Ascending aorta (tissue), 2 donors: ENCODE measurements at regions of chr9 and their contacts with region 1.

Region 1: GRCh38 chr9:112333639-112334431 is 416 bp upstream of the PTBP3 start:
- DNase-seq: peak; percentile 65 to 97
- H3K4me3 ChIP-seq: peak overlapping the region; percentile 83 to 95
- H3K27ac ChIP-seq: peak overlapping the region; percentile 98 to 100
- H3K4me1 ChIP-seq: peaks cover 0 to 7% of the 10 kb centered on the region in 2 donors
- H3K27me3 ChIP-seq: no peaks in the 10 kb centered on the region
- CTCF ChIP-seq: peak; percentile 31 to 77 (median 63)

Region 2: DNA sequence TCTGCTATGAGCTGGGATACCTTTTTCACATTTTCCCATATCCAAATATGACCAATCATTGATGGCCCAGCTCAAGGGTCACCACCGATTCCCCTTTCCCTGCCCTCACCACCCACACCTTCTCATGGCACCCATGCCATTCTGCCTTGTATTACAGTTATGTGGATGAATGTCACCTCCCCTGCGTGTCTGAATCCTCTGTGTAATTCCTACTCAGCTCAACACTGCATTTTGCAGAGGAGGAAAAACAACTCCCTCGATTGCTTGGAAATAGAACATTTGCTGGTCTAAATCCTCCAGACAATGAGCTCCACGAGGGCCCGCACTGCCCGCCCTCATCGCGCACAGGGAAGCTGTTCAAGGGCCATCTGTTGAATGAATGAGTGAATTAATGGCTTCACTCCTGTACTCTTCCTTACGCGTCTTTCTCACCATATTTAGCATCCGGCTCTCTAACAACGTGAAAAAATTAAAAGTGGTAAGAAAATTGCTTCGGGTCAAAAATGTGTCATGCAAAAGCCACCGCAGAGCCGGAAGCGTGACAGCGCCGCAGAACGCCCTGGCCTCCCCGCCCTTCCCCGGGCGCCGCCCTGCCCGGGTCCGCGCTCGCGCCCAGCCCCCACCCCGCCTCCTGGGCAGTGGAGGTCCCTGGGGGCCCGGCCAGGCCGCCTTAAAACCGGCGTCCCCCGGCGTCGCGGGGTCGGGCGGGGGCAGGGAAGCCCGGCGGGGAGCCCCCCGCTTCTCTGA is 159.4 kb before region 1 on chr9:
- intact Hi-C with region 1: loop called (anchors 1 kb)
- DNase-seq: peak in 1 of 2 donors; percentile 83
- H3K4me3 ChIP-seq: peak overlapping the region; percentile 76 to 78
- H3K27ac ChIP-seq: peak overlapping the region; percentile 12 to 43
- H3K4me1 ChIP-seq: peaks cover 0 to 6% of the 10 kb centered on the region in 2 donors
- H3K27me3 ChIP-seq: no peaks in the 10 kb centered on the region
- CTCF ChIP-seq: no peak

Region 3: DNA sequence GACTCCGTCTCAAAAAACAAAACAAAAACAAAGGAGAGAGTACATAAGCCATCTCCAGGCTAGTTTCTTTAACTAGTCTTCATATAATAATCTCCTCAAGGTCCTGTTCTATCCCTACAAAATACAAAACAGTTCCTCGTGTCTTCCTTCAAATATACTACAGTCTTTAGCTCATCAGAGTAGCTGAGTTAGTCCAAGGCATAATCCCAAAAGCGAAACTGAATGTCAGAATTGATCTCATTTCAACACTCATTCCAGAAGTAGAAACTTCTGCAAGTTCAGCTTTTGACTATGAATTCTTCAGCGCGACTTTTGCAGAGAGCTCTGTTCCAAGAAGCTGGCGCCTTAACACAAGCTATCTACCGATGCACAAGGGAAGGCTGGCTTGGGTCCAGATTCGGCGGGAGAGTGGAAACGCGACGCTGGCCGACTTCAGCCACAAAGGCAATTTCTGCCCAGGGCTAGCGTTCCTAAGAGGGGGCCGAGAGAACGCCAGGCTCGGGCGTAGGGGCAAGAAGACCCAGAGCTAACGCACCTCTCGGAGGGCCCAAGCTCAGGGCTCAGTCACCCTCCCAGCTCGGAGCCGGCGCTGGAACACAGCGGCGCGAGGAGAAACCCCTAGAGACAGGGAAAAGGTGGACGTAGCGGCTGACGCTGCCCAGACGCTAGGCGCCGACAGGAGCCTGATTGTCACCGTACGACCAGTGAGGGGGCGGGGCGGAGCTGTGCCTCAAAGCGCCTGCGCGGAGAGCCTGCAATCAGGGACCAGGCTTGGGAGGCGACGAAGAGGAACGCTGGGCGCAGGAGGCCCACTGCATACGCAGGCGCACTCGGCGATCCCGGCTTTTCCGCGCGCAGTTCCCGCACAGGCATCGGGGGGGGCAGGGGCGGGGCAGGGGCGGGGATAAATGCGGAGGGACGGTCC is 45.6 kb after region 1 on chr9:
- intact Hi-C with region 1: loop called (anchors 1 kb)
- DNase-seq: peak; percentile 97 to 100
- H3K4me3 ChIP-seq: peak overlapping the region; percentile 89 to 94
- H3K27ac ChIP-seq: peak overlapping the region; percentile 92 to 98
- H3K4me1 ChIP-seq: peaks cover 0 to 30% of the 10 kb centered on the region in 2 donors
- H3K27me3 ChIP-seq: no peaks in the 10 kb centered on the region
- CTCF ChIP-seq: no peak

Region 4: GRCh38 chr9:112421771-112422222 is 88.0 kb after region 1 on chr9:
- intact Hi-C with region 1: no loop called
- DNase-seq: no peak
- H3K4me3 ChIP-seq: no peak overlapping the region
- H3K27ac ChIP-seq: no peak overlapping the region
- H3K4me1 ChIP-seq: no peaks in the 10 kb centered on the region
- H3K27me3 ChIP-seq: no peaks in the 10 kb centered on the region
- CTCF ChIP-seq: no peak

Region 5: DNA sequence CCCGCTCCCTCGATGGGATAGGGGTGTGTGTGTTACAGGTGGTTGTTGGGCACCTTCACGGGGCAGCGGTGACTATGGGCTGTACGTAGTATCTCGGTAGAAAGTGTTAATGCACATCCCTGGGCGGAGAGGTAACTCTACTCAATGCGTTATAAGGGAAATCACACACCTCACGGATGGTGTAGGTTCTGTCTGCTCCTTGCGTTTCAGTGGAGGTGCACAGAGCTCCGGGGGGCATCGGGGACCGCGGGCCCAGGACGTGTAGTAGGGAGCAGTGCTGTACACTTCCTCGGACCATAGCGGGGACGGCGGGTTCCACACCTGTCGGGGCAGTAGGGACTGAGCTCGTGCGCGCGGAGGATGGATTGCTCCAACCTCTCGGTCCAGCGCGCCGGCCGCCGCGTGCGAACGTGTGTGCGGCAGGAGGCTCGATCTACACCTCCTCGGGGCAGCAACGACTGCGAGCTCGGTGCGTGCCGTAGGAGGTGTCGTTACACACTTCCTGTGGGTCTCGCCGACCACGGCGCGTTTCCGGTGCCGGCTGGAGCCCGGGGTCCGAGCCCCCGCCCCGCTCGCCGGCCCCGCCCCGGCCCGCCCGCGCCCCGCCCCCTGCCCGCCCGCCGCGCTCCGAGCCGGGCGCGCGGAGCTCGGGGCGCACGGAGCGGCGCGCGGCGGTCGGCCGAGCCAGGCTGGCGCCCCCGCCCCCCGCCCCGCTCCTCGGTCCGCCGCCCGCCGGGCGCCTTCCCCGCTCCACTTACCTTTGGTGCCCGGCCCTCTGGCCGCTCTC is 152.6 kb after region 1 on chr9 and contains the start of gene KIAA1958:
- intact Hi-C with region 1: loop called (anchors 5 kb)
- DNase-seq: peak; percentile 33 to 89
- H3K4me3 ChIP-seq: peak within 1 kb of the TSS; percentile 96 to 99
- H3K27ac ChIP-seq: peak within 1 kb of the TSS; percentile 80 to 89
- H3K4me1 ChIP-seq: peaks cover 3 to 10% of the 10 kb centered on the region in 2 donors
- H3K27me3 ChIP-seq: no peaks in the 10 kb centered on the region
- CTCF ChIP-seq: no peak
- total RNA-seq, gene KIAA1958: 2.0 TPM

Region 6: DNA sequence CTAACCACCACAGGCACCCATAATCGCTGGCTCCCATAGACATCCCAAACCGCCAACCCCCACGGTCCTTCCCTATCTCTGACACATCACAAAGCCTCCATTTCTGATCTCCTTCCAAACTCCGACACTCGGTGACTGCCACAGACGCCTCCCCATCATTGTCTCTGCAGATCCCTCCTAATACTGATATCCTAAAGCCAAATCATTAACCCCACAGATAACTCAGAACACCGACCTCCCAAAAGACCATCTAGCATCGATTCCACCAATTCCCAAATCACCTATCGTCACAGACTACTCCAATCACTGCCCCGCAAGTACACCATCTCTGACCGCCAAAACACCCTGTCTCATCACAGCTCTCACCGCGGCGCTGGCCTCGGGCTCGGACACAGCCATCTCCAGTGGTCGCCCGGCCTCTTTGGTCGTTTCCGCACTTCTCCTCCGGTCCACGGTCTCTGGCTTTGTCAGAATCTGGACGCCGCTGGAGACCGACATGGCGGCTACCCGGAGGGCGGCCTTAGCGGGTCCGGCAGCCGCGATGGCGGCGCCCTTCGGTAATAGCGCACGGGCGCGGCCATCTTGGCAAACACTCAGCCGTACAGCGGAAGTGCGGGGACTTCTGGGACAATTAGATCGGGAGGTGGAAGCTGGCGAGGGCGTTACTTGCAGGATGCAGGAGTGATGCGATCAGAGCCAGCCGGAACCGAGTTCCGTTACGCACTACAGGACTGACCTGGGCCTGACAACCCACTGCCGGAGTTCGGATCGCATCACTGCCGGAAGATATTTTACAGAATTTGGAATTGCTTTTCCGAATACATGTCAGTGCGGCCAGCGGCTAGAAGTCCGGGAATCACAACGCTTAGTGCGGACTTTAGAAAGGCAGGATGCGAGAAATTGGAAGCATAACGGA is 722.6 kb after region 1 on chr9 and contains the start of gene ZFP37:
- intact Hi-C with region 1: loop called (anchors 10 kb)
- DNase-seq: peak; percentile 77 to 97
- H3K4me3 ChIP-seq: peak within 1 kb of the TSS; percentile 69 to 77
- H3K27ac ChIP-seq: peak within 1 kb of the TSS; percentile 62 to 84
- H3K4me1 ChIP-seq: no peaks in the 10 kb centered on the region
- H3K27me3 ChIP-seq: peaks cover 2% of the 10 kb centered on the region
- CTCF ChIP-seq: no peak
- total RNA-seq, gene ZFP37: 3.3 TPM